Mammary epithelial cell (primary cell): ENCODE measurements at regions of chr1 and their contacts with region 1.

Region 1: GRCh38 chr1:147172168-147172992 is at the start of gene PRKAB2:
- DNase-seq: peak; percentile 95
- H3K4me3 ChIP-seq: peak within 1 kb of the TSS; percentile 88 to 97 (median 92)
- H3K27ac ChIP-seq: peak within 1 kb of the TSS; percentile 74
- H3K4me1 ChIP-seq: peaks cover 20% of the 10 kb centered on the region
- H3K27me3 ChIP-seq: no peaks in the 10 kb centered on the region
- CTCF ChIP-seq: peak; percentile 64 to 80
- total RNA-seq, gene PRKAB2: 24.6 to 30.8 TPM

Region 2: DNA sequence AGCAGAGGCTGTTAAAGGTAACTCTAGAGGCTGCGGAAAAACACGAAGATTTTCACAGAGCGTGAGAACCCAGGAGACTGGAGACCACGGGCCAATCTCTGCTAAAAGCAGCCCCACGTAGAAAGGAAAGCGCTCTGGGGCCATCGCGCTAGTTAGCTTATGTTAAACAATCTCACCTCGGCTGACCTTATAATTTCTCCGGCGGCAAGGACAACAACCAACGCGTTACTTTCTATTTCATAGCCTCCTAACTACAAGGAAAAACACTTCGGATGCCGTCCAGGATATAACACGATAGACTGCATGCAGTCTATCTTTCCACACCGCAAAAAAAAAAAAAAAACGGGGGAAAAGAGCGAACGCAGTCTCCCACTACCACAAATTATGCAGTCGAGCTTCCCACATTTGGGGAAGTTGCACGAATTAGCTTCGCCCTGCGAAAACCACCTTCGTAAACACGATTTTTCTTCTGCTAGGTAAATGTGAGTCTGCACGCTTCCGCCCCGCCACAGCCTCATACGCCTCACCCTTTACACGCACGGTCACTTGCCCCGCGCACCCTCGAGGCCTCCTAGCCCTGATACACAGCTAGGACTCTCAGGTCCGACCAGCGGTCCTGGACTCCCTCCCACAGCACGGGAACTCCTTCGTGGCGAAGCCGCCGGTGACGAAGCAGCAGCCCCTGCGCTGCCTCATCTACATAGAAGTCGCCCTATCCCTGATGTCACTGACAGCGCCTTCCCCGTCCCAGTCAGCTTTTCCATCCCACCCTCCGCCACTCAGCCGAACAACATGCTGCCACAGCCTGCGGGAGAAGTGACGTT is 87.9 kb before region 1 on chr1:
- CTCF ChIA-PET with region 1: no interaction called
- dilution Hi-C with region 1: no loop called
- in situ Hi-C with region 1: no loop called
- intact Hi-C with region 1: loop called (anchors 2 kb)
- DNase-seq: peak; percentile 98
- H3K4me3 ChIP-seq: peak overlapping the region; percentile 54 to 67 (median 57)
- H3K27ac ChIP-seq: peak overlapping the region; percentile 97
- H3K4me1 ChIP-seq: peaks cover 13% of the 10 kb centered on the region
- H3K27me3 ChIP-seq: peaks cover 14% of the 10 kb centered on the region
- CTCF ChIP-seq: no peak

Region 3: GRCh38 chr1:147225193-147225730 is 52.9 kb after region 1 on chr1 and contains the start of gene FMO5:
- CTCF ChIA-PET with region 1: no interaction called
- dilution Hi-C with region 1: no loop called
- in situ Hi-C with region 1: no loop called
- intact Hi-C with region 1: loop called (anchors 5 kb)
- DNase-seq: peak; percentile 42
- H3K4me3 ChIP-seq: peak within 1 kb of the TSS; percentile 69 to 89 (median 72)
- H3K27ac ChIP-seq: no peak within 1 kb of the TSS
- H3K4me1 ChIP-seq: no peaks in the 10 kb centered on the region
- H3K27me3 ChIP-seq: no peaks in the 10 kb centered on the region
- CTCF ChIP-seq: no peak
- total RNA-seq, gene FMO5: 0.94 to 1.3 TPM

Region 4: DNA sequence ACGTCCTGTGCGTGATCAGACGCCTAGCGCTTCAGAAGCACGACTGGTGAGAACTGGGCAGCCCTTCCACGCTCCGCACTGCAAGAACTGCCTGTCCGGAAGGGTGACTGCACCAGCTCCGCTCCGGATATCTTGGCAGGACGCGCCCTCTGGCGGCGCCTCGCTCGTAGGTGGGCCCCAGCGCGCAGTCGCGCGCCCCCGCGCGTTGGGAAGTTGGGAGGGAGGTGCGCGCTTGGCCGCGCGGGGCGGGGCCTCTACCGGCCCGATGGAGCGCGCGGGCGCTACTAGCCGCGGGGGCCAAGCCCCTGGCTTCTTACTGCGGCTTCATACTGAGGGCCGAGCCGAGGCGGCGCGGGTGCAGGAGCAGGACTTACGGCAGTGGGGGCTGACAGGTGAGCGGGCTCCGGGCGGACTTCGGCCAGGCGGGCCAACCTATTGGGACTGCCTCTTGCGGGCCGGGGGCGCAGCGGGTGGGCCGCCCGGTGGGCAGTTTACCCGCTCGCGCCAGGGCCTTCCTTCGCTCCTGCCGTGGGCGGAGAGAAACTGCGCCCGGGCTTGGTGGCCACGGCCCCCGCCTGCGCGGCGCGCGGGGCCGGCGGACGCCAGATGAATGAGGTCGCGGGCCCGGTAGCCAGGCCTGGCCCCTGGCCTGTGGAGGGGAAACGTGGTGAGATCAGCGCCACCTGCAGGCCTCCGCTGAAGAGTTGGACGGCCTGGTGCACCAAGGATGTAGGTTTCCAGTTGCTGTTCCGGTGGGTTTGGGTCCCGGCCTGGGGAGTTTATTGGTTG is 70.3 kb after region 1 on chr1 and contains the start of gene CHD1L:
- CTCF ChIA-PET with region 1: interaction called, 5 read pairs
- dilution Hi-C with region 1: no loop called
- in situ Hi-C with region 1: loop called (anchors 5 kb)
- intact Hi-C with region 1: loop called (anchors 1 kb)
- DNase-seq: peak; percentile 94
- H3K4me3 ChIP-seq: peak within 1 kb of the TSS; percentile 88 to 94 (median 93)
- H3K27ac ChIP-seq: peak within 1 kb of the TSS; percentile 76
- H3K4me1 ChIP-seq: peaks cover 14% of the 10 kb centered on the region
- H3K27me3 ChIP-seq: no peaks in the 10 kb centered on the region
- CTCF ChIP-seq: peak; percentile 79 to 95
- total RNA-seq, gene CHD1L: 33.0 to 50.9 TPM